Posterior vena cava (tissue), 2 donors: ENCODE measurements at regions of chr6 and their contacts with region 1.

Region 1: GRCh38 chr6:40328405-40328987 is 258.7 kb downstream of the LRFN2 start:
- DNase-seq: no peak

Region 2: DNA sequence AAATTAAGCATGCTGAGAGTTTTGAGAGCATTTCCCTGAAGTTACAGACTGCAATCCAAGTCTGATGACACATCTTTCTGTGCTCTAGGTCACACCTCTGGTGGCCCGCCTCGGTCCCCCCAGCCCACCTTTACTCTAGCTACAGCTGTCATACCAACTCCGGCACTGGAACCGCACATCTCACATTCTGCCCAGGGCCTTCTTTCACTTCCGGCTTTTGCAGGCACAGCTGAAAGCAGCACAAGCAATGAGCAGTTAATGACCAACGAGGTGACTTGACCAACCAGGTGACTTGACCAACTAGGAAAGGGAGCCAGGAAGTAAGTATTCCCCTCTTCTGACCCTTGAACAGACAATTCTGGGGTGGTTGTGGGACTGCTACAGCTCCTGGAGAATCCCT is 305.6 kb before region 1 on chr6:
- intact Hi-C with region 1: loop called in 1 of 2 experiments (anchors 2 kb)
- DNase-seq: no peak

Region 3: GRCh38 chr6:40282986-40283385 is 45.5 kb before region 1 on chr6:
- intact Hi-C with region 1: loop called in 1 of 2 experiments (anchors 2 kb)
- DNase-seq: no peak